Dorsolateral prefrontal cortex (tissue), 120 donors: ENCODE measurements at regions of chr15 and their contacts with region 1.

Region 1: GRCh38 chr15:31280046-31280830 is 46.4 kb upstream of the KLF13 start:
- DNase-seq: peak in 9 of 10 donors; percentile 78 to 95 (median 92)
- H3K4me3 ChIP-seq: peak overlapping the region in 7 of 59 donors; percentile 1 to 27 (median 16)
- H3K27ac ChIP-seq: peak overlapping the region in 58 of 59 donors; percentile 82 to 98 (median 93)
- H3K27me3 ChIP-seq: no peaks in the 10 kb centered on the region
- CTCF ChIP-seq: peak in 21 of 56 donors; percentile 2 to 37 (median 20)

Region 2: GRCh38 chr15:30991255-30992072 is 288.8 kb before region 1 on chr15 and contains the start of gene MTMR10:
- intact Hi-C with region 1: no loop called
- DNase-seq: peak; percentile 42 to 85 (median 57)
- H3K4me3 ChIP-seq: peak within 1 kb of the TSS; percentile 67 to 100 (median 94)
- H3K27ac ChIP-seq: peak within 1 kb of the TSS; percentile 77 to 99 (median 95)
- H3K27me3 ChIP-seq: no peaks in the 10 kb centered on the region
- CTCF ChIP-seq: peak in 22 of 56 donors; percentile 7 to 40 (median 18)
- total RNA-seq, gene MTMR10: 33.2 to 154 (median 67.8) TPM

Region 3: GRCh38 chr15:31292391-31293015 is 12.3 kb after region 1 on chr15:
- intact Hi-C with region 1: loop called in 1 of 2 experiments (anchors 1 kb)
- DNase-seq: peak in 7 of 10 donors; percentile 16 to 66 (median 34)
- H3K4me3 ChIP-seq: peak overlapping the region in 1 of 59 donors; percentile 21
- H3K27ac ChIP-seq: peak overlapping the region; percentile 66 to 99 (median 93)
- H3K27me3 ChIP-seq: no peaks in the 10 kb centered on the region
- CTCF ChIP-seq: peak in 3 of 56 donors; percentile 11 to 14 (median 11)

Region 4: GRCh38 chr15:31300208-31300661 is 20.0 kb after region 1 on chr15:
- intact Hi-C with region 1: loop called (anchors 1 kb)
- DNase-seq: peak; percentile 52 to 95 (median 92)
- H3K4me3 ChIP-seq: peak overlapping the region in 8 of 59 donors; percentile 2 to 43 (median 24)
- H3K27ac ChIP-seq: peak overlapping the region; percentile 65 to 99 (median 94)
- H3K27me3 ChIP-seq: no peaks in the 10 kb centered on the region
- CTCF ChIP-seq: peak in 7 of 56 donors; percentile 9 to 26 (median 15)

Region 5: DNA sequence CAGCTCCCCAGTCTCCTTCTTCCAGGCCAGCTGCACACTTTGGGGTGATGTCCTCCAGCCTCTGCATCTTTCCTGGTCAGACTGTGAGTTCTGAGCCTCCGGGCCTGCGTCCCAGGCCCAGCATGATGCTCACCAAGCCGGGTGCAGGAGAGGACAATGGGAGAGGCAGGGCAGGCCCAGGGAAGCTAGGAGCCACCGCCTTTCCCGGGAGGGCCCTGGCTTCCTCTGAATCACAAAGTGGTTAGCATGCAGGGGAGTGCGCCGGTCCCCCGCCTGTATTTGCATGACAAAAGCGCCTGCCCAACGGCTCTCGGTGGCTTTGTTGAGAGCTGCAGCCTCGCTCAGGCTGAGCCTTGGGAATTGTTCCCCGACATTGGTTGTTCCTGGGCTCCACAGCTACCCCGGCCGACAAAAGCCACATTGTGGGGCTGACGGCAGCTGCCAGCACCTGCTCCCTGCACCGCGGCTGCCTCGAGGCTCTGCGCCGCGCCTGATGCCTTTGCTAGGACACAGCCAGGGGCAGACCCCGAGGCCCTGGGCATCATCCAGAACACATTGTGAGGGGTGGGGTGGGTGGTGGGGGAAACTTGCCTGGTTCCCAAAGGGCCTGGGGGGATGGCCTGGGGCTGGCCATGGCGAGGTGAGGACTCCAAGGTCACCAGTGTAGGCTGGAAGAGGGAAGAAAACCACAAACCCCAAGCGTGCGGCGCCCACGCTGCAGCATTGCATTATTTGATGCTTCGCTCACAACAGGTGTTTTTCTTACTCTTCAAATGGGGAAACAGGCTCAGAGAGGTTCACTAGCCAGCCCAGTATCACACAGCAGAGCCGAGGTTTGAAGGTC is 26.4 kb after region 1 on chr15:
- intact Hi-C with region 1: loop called in 1 of 2 experiments (anchors 1 kb)
- DNase-seq: peak; percentile 53 to 98 (median 94)
- H3K4me3 ChIP-seq: peak overlapping the region in 17 of 59 donors; percentile 5 to 44 (median 23)
- H3K27ac ChIP-seq: peak overlapping the region; percentile 60 to 99 (median 94)
- H3K27me3 ChIP-seq: no peaks in the 10 kb centered on the region
- CTCF ChIP-seq: peak in 20 of 56 donors; percentile 10 to 42 (median 24)